Right cardiac atrium (tissue), 5 donors: ENCODE measurements at regions of chr1 and their contacts with region 1.

Region 1: GRCh38 chr1:244970661-244971551 is 106.6 kb upstream of the HNRNPU start:
- DNase-seq: peak; percentile 92 to 98 (median 97)
- ATAC-seq: peak; percentile 94 to 95
- H3K4me3 ChIP-seq: peak overlapping the region; percentile 77
- H3K27ac ChIP-seq: peak overlapping the region; percentile 100
- H3K4me1 ChIP-seq: peaks cover 5% of the 10 kb centered on the region
- H3K27me3 ChIP-seq: no peaks in the 10 kb centered on the region

Region 2: DNA sequence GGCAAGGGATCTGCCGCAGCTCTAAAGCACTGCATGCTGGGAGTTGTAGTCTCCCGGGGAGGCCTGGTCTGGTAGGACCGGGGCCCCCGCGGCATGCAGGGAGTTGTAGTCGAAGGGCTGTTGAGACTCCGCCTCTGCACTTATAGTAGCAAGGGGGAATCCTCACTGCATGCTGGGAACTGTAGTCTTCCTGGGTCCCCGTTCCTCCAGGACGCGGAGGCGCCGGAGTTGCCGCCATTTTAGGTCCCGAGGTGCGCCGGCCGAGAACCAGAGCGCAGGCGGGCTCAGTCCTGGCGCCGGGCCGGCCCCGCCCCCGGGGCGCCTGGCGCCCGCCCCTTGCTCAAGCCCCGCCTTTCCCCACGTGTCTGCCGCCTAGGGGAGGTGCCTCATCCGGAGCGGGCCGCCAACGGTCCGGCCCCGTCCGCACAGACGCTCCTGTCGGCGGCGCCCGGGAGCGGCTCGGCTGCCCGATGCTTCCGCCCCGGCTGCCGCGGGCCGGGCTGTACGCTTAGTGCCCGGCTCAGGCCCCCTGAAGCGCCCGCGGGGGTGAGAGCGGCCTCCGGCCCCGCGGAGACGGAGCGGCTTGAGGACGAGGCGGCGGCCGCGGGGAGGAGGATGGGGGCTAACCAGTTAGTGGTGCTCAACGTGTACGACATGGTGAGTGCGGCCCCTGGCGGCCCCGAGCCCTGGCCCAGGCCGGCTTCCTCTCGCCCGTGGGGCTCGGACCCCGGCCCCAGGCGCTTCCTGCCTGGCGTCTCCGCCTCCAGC is 318.0 kb before region 1 on chr1 and contains the start of gene DESI2:
- intact Hi-C with region 1: loop called in 1 of 4 experiments (anchors 10 kb)
- DNase-seq: peak; percentile 99
- ATAC-seq: peak; percentile 98
- H3K4me3 ChIP-seq: peak within 1 kb of the TSS; percentile 79
- H3K27ac ChIP-seq: peak within 1 kb of the TSS; percentile 84
- H3K4me1 ChIP-seq: peaks cover 8% of the 10 kb centered on the region
- H3K27me3 ChIP-seq: no peaks in the 10 kb centered on the region
- total RNA-seq, gene DESI2: 23.7 to 27.0 (median 24.6) TPM

Region 3: DNA sequence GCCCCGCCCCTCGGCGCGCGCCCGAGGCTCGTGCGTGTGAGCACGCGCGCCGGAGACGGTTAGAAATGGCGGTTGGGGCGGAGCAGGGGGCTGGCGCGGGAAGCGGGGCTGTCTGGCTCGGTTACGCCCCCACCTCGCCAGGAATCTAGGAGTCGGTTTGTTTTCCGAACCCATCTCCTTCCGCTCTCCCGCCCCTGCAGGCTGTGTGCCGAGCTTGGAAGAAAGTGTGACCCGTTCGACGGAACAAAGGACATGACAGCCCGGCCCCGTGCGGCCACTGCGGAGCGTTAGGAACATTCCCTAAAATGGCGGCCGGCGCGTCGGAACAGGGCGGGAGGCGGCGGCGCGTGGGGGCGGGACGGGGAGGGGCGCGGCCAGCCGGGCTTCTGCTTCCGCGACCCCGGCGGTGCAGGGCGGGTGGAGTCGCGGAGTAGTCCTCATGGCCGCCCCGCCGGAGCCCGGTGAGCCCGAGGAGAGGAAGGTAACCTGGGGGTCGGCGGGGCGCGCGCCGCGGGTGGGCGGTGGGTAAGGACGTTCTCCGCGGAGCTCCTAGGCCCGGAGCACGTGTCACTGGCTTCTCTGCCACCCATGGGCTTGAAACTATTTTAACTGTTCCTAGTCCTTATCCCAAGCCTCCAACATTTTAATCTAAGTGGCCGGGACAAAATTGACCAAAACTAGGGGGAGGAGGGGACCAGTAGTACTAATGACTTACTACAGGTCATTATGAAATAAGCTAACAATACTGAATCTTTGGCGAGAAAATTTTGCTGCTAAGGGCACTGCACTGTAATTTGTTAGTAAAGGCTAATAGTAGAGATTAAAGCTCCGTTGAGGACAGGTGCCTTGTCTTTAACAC is 135.4 kb before region 1 on chr1 and contains the start of gene COX20:
- intact Hi-C with region 1: loop called in 2 of 4 experiments (anchors 10 kb)
- DNase-seq: peak; percentile 91 to 98 (median 97)
- ATAC-seq: peak; percentile 91 to 93
- H3K4me3 ChIP-seq: peak within 1 kb of the TSS; percentile 95
- H3K27ac ChIP-seq: peak within 1 kb of the TSS; percentile 93
- H3K4me1 ChIP-seq: peaks cover 4% of the 10 kb centered on the region
- H3K27me3 ChIP-seq: no peaks in the 10 kb centered on the region
- total RNA-seq, gene COX20: 57.8 to 68.5 (median 63.0) TPM

Region 4: GRCh38 chr1:244864253-244865027 is 106.5 kb before region 1 on chr1 and contains the start of gene HNRNPU:
- intact Hi-C with region 1: loop called (anchors 2 to 10 kb)
- DNase-seq: peak; percentile 98 to 100 (median 99)
- ATAC-seq: peak; percentile 95 to 96
- H3K4me3 ChIP-seq: peak within 1 kb of the TSS; percentile 90
- H3K27ac ChIP-seq: peak within 1 kb of the TSS; percentile 98
- H3K4me1 ChIP-seq: peaks cover 5% of the 10 kb centered on the region
- H3K27me3 ChIP-seq: no peaks in the 10 kb centered on the region
- total RNA-seq, gene HNRNPU: 180 to 194 (median 184) TPM